HEK293 (cell line): ENCODE measurements at regions of chr15 and their contacts with region 1.

Region 1: DNA sequence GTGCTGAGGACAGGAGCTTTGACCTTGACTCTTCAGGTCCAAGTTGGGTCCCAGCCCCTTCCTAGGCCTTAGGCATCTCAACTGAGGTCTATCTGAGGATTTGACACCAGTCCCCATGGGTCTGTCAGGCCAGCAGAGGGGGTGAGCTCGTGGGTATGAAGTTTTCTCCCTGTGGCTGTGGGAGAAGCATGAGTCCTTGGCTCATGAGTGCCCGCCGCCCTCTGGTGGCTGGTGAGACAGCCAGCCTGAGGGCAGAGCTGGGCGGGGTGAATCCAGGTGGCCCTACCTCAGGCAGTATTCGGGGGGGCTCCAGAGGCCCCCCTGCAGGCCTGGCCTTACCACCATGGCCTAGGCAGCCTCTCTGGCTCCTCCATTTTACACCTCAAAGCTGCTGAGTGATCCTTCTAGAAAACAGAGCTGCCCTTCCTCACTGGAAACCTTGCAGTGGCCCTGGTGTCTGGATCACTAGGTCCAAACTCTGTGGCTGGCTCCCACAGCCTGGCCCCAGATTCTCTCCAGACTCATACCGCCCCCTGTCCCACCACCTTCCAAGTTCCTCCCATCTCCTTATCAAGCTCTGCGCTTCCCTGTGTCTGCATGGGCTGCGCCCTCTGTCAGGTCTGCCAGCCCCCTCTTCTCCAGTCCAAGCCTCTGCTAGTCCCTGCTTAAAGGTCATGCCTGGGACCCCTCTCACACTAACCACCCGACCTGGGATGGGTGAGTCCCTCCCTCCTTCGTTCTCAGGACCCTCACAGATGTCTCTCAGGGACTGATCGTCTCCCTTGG is 16.1 kb downstream of the SH2D7 start:
- H3K4me3 ChIP-seq: no peak overlapping the region
- H3K27ac ChIP-seq: no peak overlapping the region
- H3K4me1 ChIP-seq: no peaks in the 10 kb centered on the region
- CTCF ChIP-seq: peak; percentile 95

Region 2: DNA sequence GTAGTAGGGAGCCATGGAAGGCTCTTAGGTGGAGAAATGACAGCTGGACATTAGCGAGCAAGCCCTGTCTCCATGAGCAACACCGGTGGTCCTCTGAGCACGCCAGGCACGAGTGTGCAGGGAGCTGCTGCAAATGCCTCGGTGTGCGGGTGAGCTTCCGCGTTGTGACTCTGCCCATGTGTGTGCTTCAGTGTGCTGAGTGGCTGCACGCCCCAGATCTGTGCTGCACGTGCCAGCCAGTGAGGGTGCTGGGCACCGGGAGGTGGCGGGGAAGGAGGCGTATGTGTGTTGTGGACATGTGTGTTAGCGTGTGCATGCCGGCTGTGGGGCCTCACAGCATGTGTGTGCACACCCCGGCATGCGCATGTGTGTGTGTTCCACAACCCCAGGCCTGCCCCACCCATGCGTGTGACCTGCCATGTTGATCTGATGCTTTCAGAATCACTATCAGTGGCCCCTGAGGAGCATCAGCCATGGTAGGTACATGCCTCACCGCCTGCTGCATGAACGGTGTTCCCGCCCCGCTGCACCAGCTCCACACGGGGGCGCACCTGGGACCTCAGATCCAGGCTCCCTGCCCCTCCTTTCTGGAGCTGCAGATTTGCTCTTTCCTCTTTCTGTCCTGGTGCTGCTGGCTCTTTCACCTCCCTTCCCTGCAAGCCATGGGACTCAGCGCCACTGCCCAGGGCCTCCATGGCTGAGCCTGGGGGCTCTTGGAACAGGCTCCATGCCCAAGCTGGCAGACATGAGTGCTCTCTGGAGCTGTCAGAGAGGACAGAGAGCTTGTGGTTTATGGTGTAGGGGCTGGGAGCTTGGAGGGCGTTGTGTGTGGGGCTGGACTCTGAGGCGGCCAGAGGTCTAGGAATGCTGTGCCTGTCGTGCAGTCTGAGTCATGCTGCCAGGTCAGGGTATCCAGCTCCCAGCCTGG is 200.4 kb before region 1 on chr15:
- CTCF ChIA-PET with region 1: interaction called, 12 read pairs
- POLR2A ChIA-PET with region 1: no interaction called
- H3K4me3 ChIP-seq: no peak overlapping the region
- H3K27ac ChIP-seq: no peak overlapping the region; the same call in 1 of the 2 replicates
- H3K4me1 ChIP-seq: no peaks in the 10 kb centered on the region
- CTCF ChIP-seq: peak; percentile 66; the same call in 1 of the 2 replicates

Region 3: DNA sequence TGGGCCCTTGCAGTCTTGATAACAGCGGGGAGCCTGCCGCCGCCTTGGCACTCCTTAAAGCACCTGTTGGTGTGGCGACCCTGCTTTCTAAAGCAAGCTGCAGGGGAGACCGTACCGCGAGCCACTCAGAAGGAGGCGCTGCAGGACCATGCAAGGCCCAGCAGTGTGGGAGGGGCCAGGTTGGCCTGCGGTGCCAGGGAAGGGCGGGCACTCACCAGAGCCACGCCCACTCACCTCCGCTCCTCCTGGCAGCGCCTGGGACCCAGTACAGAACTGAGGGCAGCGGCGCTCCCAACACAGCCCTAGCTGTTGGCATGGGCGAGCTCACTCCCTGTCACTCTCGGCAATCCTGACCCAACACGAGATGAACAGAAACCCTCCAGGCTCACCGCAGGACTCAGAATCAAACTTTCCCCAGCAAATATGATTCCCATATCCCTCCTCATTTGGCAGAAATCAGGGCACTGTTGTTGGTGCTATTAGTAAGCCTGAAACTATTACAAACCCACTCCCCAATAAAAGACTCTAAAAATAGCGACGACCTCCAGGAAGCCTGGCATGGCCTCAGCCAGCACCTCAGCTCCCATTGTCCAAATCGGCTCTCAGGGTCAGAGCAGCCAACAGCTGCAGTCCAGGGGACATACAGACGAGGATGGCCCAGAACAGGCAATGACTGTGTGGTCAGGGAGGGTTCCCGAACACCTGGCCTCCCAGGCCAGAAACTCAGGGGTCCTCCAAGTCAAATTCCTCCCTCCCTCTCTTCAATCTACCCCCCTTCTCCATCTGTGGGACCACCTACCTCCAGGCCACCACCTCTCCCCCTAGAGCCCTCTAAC is 108.2 kb before region 1 on chr15:
- CTCF ChIA-PET with region 1: interaction called, 67 read pairs
- POLR2A ChIA-PET with region 1: no interaction called
- H3K4me3 ChIP-seq: no peak overlapping the region
- H3K27ac ChIP-seq: no peak overlapping the region
- H3K4me1 ChIP-seq: peaks cover 6% of the 10 kb centered on the region; the same call in 1 of the 2 replicates
- CTCF ChIP-seq: peak; percentile 87

Region 4: DNA sequence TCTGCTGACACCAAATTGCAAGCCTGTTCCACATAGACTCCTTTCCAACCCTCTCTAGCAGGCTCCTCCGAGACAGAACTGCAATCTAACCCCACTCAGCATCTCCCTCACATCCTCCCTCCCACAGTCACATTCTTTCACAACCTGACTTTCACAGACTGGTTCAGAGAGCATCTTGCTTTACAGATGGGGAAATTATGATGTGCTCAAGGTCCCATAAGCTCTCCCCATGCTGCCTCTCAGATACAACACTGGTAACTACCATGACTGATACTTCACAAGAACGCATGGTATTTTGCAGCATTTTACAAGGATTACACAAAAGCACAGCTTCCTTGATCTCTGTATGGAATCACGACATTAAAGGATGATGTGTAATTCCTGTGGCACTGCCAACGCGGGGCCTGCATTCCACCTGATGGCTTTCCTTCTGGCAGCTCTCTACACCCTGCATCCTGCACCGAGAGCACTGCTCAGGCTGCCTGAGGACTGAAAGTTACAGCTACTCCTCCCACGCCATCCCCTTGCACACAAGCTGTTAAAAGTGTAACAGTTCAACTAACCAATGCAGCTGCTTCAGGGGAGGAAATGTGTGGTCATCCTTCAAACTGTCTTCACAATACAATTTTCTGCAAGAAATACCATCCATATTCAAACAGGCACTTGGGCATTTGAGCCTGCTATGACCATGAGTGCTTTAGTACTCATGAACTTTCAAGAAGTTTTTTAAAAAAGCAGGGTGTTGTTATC is 58.6 kb before region 1 on chr15:
- CTCF ChIA-PET with region 1: interaction called, 13 read pairs
- POLR2A ChIA-PET with region 1: no interaction called
- H3K4me3 ChIP-seq: no peak overlapping the region
- H3K27ac ChIP-seq: no peak overlapping the region
- H3K4me1 ChIP-seq: peaks cover 21% of the 10 kb centered on the region
- CTCF ChIP-seq: no peak

Region 5: DNA sequence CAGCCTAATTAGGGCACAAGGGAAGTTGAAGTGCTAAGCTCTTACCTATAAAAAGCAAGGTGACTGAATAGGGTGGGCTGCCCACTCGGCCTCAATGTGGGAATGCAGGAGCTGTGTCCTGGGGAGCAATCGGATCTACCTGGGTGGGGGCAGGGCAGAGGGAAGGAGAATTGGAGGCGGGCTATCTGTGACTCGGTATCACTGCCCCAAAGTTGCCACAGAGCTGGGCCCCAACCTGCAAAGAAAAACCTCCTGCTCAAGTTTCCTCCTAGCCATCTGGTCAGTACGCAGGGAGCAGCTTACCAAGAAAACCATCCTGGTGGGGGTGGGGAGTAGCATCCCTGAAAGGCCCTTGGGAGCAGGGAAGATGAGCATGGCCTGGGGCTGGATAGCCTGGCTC is 12.0 kb after region 1 on chr15:
- CTCF ChIA-PET with region 1: interaction called, 29 read pairs
- POLR2A ChIA-PET with region 1: no interaction called
- H3K4me3 ChIP-seq: no peak overlapping the region
- H3K27ac ChIP-seq: no peak overlapping the region
- H3K4me1 ChIP-seq: 0 out of 2 replicates have a peak, but pooled peaks cover 2% of the 10 kb centered on the region
- CTCF ChIP-seq: no peak

Region 6: GRCh38 chr15:78195735-78196201 is 87.3 kb after region 1 on chr15:
- CTCF ChIA-PET with region 1: interaction called, 54 read pairs
- POLR2A ChIA-PET with region 1: interaction called, 12 read pairs
- H3K4me3 ChIP-seq: no peak overlapping the region
- H3K27ac ChIP-seq: no peak overlapping the region
- H3K4me1 ChIP-seq: no peaks in the 10 kb centered on the region
- CTCF ChIP-seq: peak; percentile 83

Region 7: DNA sequence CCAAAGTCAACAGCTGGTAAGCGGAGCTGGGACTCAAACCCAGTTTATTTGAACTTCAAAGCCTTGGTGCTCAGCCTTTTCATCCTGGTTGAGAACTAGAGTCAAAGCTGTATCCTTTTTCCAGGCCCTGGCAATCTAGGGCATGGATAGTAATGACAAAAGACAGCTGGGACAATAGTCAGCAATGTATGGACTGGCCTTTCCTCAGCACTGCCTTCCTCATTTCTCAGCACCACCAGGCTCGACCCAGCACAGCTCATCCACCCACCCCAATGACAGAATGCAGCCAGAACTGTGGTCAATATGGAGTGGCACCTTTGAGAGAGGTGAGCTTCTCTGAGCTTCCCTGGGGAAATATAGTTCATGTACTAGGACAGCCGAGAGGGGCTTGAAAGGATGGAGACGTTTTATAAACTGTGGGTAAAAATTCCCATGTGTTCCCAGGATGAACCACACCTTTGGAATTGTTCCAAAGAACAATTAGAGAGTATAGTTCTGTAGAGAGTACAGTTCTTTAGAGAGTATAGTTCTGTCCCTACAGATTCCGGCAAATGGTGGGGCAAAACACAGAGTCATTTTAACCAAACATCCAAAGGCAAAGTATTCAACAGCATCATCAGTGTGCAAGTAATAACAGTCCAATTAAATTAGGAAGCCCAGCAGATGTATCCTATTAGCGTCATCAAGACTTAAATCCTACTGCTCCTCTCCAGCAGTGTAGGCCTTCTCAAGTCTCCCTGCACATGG is 299.3 kb after region 1 on chr15:
- CTCF ChIA-PET with region 1: no interaction called
- POLR2A ChIA-PET with region 1: no interaction called
- H3K4me3 ChIP-seq: no peak overlapping the region
- H3K27ac ChIP-seq: no peak overlapping the region
- H3K4me1 ChIP-seq: peaks cover 7% of the 10 kb centered on the region
- CTCF ChIP-seq: no peak